GM12878 (cell line): ENCODE measurements at regions of chr1 and their contacts with region 1.

Region 1: GRCh38 chr1:27489910-27490741 is at the start of gene WASF2:
- DNase-seq: peak; percentile 89
- ATAC-seq: peak; percentile 92
- H3K4me3 ChIP-seq: peak within 1 kb of the TSS; percentile 98
- H3K27ac ChIP-seq: peak within 1 kb of the TSS; percentile 99
- H3K4me1 ChIP-seq: peaks cover 27% of the 10 kb centered on the region
- H3K27me3 ChIP-seq: no peaks in the 10 kb centered on the region
- CTCF ChIP-seq: no peak
- EP300 ChIP-seq: peak in 1 of 2 experiments; percentile 35; a peak in 1 of 4 replicates
- POLR2A ChIP-seq: peak; percentile 91
- RAD21 ChIP-seq: no peak
- polyA plus RNA-seq, gene WASF2: 7.0 to 9.3 TPM

Region 2: DNA sequence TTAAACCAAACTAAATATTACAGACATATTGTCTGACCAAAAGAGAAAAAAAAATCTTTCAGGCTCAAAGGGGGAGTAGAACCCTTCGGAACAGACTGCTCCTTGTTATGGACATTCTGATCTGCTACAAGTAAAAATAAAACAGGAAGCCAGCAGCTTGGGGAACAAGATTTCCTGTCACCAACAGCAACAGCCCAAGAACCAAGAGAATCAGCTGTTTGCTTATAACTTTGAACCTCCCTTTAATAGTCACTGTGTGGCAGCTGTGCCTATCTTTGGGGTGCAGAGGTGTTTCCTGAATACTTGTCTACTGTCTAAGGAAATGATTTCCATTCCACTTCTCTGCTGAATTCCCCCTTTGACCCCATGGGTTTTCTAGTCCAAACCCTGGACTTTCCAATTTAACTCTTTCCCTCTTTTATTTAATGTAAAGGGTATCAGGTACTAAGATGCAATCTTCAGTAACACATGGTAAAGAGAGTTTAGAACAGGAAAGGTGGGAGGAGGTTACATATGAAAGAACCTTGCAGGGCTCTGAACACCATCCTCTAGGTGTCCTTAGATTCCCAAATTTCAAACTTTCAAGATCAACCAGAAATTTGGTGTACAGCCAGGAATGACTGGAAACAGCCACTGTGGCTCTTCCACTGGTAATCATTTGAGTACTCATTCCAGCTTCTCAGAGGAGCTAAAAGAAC is 59.1 kb before region 1 on chr1:
- CTCF ChIA-PET with region 1: interaction called, 5 read pairs
- POLR2A ChIA-PET with region 1: interaction called, 11 read pairs
- RAD21 ChIA-PET with region 1: interaction called, 18 read pairs
- SMC1A ChIA-PET with region 1: interaction called, 67 read pairs
- in situ Hi-C with region 1: no loop called
- intact Hi-C with region 1: no loop called
- DNase-seq: no peak
- ATAC-seq: peak; percentile 63
- H3K4me3 ChIP-seq: peak overlapping the region; percentile 12; the same call in 1 of the 2 replicates
- H3K27ac ChIP-seq: peak overlapping the region; percentile 59
- H3K4me1 ChIP-seq: peaks cover 76% of the 10 kb centered on the region
- H3K27me3 ChIP-seq: no peaks in the 10 kb centered on the region
- CTCF ChIP-seq: 0 out of 6 replicates have a peak, but pooled peaks of 1 of the 3 experiments have one; percentile 1
- EP300 ChIP-seq: no peak
- POLR2A ChIP-seq: no peak
- RAD21 ChIP-seq: 0 out of 2 replicates have a peak, but pooled peaks have one; percentile 7

Region 3: GRCh38 chr1:27445177-27445936 is 44.8 kb before region 1 on chr1:
- CTCF ChIA-PET with region 1: interaction called, 6 read pairs
- POLR2A ChIA-PET with region 1: interaction called, 6 read pairs
- RAD21 ChIA-PET with region 1: interaction called, 42 read pairs
- SMC1A ChIA-PET with region 1: interaction called, 67 read pairs
- in situ Hi-C with region 1: no loop called
- intact Hi-C with region 1: loop called (anchors 5 kb)
- DNase-seq: no peak
- ATAC-seq: peak; percentile 80
- H3K4me3 ChIP-seq: peak overlapping the region; percentile 36; the same call in 1 of the 2 replicates
- H3K27ac ChIP-seq: peak overlapping the region; percentile 85
- H3K4me1 ChIP-seq: peaks cover 63% of the 10 kb centered on the region
- H3K27me3 ChIP-seq: no peaks in the 10 kb centered on the region
- CTCF ChIP-seq: no peak
- EP300 ChIP-seq: peak in 1 of 2 experiments; percentile 37; a peak in 2 of 4 replicates
- POLR2A ChIP-seq: no peak
- RAD21 ChIP-seq: 0 out of 2 replicates have a peak, but pooled peaks have one; percentile 3

Region 4: DNA sequence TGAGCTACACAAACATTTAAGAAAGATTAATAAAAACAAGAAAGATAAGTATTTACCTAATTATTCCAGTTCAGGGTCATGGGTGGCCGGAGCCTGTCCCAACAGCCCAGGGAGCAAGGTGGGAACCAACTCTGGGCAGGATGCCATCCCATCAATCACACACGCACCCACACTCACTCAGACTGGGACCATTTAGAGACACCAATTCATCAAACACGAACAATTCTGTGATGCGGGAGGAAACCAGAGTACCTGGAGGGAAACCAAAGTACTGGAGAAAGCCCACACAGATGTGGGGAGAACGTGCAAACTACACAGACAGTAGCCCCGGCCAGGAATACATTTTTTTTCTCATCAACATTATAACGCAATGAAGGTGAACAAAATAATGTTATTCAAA is 16.4 kb before region 1 on chr1:
- CTCF ChIA-PET with region 1: interaction called, 5 read pairs
- POLR2A ChIA-PET with region 1: interaction called, 22 read pairs
- RAD21 ChIA-PET with region 1: interaction called, 14 read pairs
- SMC1A ChIA-PET with region 1: interaction called, 6 read pairs
- in situ Hi-C with region 1: no loop called
- intact Hi-C with region 1: no loop called
- DNase-seq: no peak
- ATAC-seq: peak; percentile 9; the same call in 2 of the 3 replicates
- H3K4me3 ChIP-seq: peak overlapping the region; percentile 24; the same call in 1 of the 2 replicates
- H3K27ac ChIP-seq: peak overlapping the region; percentile 30; the same call in 1 of the 2 replicates
- H3K4me1 ChIP-seq: peaks cover 49% of the 10 kb centered on the region
- H3K27me3 ChIP-seq: no peaks in the 10 kb centered on the region
- CTCF ChIP-seq: no peak
- EP300 ChIP-seq: no peak
- POLR2A ChIP-seq: no peak
- RAD21 ChIP-seq: no peak

Region 5: DNA sequence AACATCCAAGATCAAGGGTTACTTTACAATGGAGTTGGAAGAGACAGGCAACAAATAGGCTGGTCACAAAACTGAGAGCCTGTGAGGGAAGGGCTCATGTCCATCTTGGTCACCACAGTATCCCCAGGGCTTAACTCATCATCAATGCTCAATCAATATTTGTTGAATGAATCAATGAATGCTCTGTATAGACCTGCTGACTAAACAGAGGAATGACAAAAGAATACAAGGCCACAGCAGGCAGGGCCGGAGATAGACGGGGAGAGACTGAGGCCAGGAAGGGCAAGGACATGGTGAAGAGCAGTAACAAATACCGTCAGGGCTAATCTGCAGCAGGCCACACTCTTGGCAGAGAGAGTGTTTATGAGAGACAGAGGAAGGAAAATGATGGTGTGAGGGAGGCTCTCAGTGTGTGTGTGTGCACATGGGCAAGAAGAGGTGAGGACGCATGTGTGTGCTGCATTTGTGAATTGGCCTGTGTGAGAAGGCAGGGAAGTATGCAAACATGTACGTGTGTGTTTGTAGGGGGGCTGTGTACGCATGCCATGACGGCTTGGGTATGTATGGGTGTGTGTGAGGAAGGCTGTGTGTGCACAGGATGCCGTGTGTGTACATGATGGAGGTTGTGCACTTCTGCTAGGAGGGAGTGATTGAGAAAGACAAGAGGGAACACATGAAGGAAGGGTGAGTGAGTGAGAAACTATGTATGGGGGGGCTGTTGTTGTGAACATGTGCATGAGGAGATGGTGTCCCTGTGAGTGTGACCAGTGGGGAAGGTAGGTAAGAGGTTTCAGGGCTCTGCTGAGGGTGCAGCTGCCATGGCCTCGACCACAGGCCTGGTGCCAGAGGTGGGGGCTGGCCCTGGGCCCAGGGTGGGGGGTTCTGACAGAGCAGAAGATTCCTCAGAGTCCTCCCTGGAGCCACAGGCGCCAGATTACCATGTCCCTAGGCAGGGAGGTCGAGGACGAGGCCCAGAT is 98.4 kb after region 1 on chr1:
- CTCF ChIA-PET with region 1: no interaction called
- POLR2A ChIA-PET with region 1: no interaction called
- RAD21 ChIA-PET with region 1: no interaction called
- SMC1A ChIA-PET with region 1: no interaction called
- in situ Hi-C with region 1: no loop called
- intact Hi-C with region 1: no loop called
- DNase-seq: no peak
- ATAC-seq: no peak
- H3K4me3 ChIP-seq: no peak overlapping the region
- H3K27ac ChIP-seq: no peak overlapping the region
- H3K4me1 ChIP-seq: no peaks in the 10 kb centered on the region
- H3K27me3 ChIP-seq: no peaks in the 10 kb centered on the region
- CTCF ChIP-seq: no peak
- EP300 ChIP-seq: no peak
- POLR2A ChIP-seq: no peak
- RAD21 ChIP-seq: no peak